ENCODE measurements at regions of chr10 and their contacts with region 1.

Region 1: GRCh38 chr10:3043512-3044368 is 23.6 kb upstream of the PFKP start:
- DNase-seq: peak in 1 of 2 donors; percentile 69
- ATAC-seq: peak in 2 of 3 donors; percentile 60 to 64
- H3K4me3 ChIP-seq: no peak overlapping the region
- H3K4me3 Mint-ChIP-seq: no peak overlapping the region
- H3K27ac ChIP-seq: no peak overlapping the region
- H3K27ac Mint-ChIP-seq: no peak overlapping the region
- H3K4me1 ChIP-seq: no peaks in the 10 kb centered on the region
- H3K4me1 Mint-ChIP-seq: peaks cover 0 to 6% of the 10 kb centered on the region in 2 donors
- H3K27me3 ChIP-seq: no peaks in the 10 kb centered on the region
- H3K27me3 Mint-ChIP-seq: peaks cover 5 to 9% of the 10 kb centered on the region in 2 donors
- CTCF ChIP-seq: peak; percentile 41

Region 2: DNA sequence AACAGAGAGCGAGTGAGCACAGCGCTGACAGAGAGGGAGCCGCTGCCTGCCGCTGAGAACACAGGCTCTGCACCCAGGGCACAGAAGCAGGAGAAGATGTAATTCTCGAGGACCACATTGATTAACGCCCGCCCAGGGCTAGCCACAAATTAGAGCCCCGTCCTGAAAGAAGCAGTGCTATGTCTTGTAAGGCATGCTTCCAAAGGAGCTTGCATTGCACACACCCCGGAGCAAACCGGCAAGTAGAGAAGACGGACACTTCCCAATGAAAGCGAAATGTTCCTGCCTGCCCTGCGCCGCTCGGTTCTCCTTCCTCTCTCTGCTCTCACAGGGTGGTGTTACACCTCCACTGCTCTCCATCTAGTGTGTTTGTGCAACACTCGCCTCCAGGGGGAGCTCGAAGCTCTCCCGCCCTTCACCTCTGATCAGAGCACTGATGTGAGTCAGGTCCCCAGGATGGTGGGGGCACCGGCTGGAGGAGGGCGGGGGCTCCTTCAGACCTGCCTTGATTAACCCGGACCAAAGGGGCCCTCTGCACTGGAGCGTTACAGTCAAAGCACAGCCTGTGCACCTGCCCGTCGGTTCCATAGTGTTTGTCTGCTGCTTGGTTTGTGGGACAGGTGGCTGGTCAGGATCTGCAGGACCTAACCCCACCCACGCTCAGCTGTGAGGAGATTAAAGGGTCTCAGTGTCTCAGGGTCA is 1622.9 kb before region 1 on chr10:
- intact Hi-C with region 1: loop called (anchors 10 kb)
- DNase-seq: peak; percentile 30 to 61
- ATAC-seq: peak; percentile 76 to 95 (median 83)
- H3K4me3 ChIP-seq: no peak overlapping the region
- H3K4me3 Mint-ChIP-seq: peak overlapping the region; percentile 57
- H3K27ac ChIP-seq: no peak overlapping the region
- H3K27ac Mint-ChIP-seq: no peak overlapping the region
- H3K4me1 ChIP-seq: peaks cover 8% of the 10 kb centered on the region
- H3K4me1 Mint-ChIP-seq: peaks cover 7 to 10% of the 10 kb centered on the region in 2 donors
- H3K27me3 ChIP-seq: no peaks in the 10 kb centered on the region
- H3K27me3 Mint-ChIP-seq: peaks cover 10 to 22% of the 10 kb centered on the region in 2 donors
- CTCF ChIP-seq: peak; percentile 61

Region 3: GRCh38 chr10:2927958-2928840 is 115.5 kb before region 1 on chr10:
- intact Hi-C with region 1: loop called (anchors 5 kb)
- DNase-seq: peak; percentile 37 to 64
- ATAC-seq: peak in 1 of 3 donors; percentile 50
- H3K4me3 ChIP-seq: no peak overlapping the region
- H3K4me3 Mint-ChIP-seq: no peak overlapping the region
- H3K27ac ChIP-seq: no peak overlapping the region
- H3K27ac Mint-ChIP-seq: no peak overlapping the region
- H3K4me1 ChIP-seq: no peaks in the 10 kb centered on the region
- H3K4me1 Mint-ChIP-seq: peaks cover 6% of the 10 kb centered on the region in 2 donors
- H3K27me3 ChIP-seq: no peaks in the 10 kb centered on the region
- H3K27me3 Mint-ChIP-seq: peaks cover 0 to 13% of the 10 kb centered on the region in 2 donors
- CTCF ChIP-seq: peak; percentile 39

Region 4: DNA sequence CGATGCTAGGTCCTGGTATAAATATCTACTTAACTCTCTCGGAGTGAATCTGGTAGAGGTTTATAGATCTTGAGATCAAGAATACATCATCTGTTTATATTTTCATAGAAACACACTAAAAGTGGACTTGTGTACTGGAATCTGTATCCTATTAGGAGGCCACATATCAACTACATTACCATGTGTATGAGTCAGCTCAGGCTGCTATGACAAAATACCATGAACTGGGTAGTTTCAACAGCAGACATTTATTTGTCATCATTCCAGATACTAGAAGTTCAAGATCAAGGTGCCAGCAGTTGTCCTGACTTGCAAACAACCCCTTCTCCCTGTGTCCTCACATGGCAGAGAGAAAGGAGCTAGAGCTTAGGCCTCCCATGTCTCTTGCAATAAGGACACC is 90.2 kb before region 1 on chr10:
- intact Hi-C with region 1: no loop called
- DNase-seq: no peak
- ATAC-seq: no peak
- H3K4me3 ChIP-seq: no peak overlapping the region
- H3K4me3 Mint-ChIP-seq: no peak overlapping the region
- H3K27ac ChIP-seq: no peak overlapping the region
- H3K27ac Mint-ChIP-seq: no peak overlapping the region
- H3K4me1 ChIP-seq: no peaks in the 10 kb centered on the region
- H3K4me1 Mint-ChIP-seq: no peaks in the 10 kb centered on the region
- H3K27me3 ChIP-seq: no peaks in the 10 kb centered on the region
- H3K27me3 Mint-ChIP-seq: peaks cover 8 to 14% of the 10 kb centered on the region in 2 donors
- CTCF ChIP-seq: no peak